Common myeloid progenitor, CD34-positive (primary cell): ENCODE measurements at regions of chr6 and their contacts with region 1.

Region 1: DNA sequence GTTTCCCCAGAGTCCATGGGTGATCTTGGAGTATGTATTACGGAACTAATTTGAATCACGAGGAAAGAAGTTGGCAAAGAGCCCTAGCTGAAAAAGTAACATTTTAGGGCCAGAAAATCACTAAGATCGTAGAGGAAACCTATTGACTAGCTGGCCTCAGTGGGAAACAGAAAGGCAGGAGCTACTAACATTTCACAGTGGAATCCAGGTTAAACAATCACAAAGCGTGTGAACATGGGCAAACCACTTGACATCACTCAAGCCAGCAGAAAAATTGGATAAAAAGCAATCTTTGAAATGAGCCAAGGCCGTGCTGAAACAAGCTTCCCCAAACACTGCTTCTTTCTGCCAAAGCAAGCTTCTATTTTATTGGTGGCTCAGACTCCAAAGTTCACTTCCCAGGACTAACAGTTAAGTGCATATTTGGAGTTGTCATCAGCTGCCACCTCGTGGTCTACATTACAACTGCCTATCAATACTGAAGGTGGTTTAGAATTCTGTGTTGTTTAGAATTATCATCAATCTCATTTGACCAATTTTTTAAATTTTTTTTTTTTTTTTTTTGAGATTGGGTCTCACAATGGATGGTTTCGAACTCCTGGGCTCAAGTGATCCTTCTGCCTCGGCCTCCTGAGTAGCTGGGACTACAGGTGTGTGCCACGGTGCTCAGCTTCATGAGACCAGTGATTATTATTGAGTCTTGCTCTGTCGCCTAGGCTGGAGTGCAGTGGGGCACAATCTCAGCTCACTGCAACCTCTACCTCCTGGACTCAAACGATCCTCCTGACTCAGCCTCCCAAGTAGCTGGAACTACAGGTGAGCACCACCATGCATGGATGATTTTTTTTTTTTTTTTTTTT is 10.6 kb downstream of the RPS10 start:
- DNase-seq: peak; percentile 89 to 94 (median 93)
- H3K4me3 ChIP-seq: no peak overlapping the region
- H3K27ac ChIP-seq: no peak overlapping the region
- H3K4me1 ChIP-seq: peaks cover 0 to 4% (median 2%) of the 10 kb centered on the region in 4 experiments
- H3K27me3 ChIP-seq: no peaks in the 10 kb centered on the region

Region 2: GRCh38 chr6:34161857-34162515 is 253.2 kb before region 1 on chr6:
- CTCF ChIA-PET with region 1: interaction called, 13 read pairs
- POLR2A ChIA-PET with region 1: interaction called, 3 read pairs
- DNase-seq: no peak
- H3K4me3 ChIP-seq: no peak overlapping the region
- H3K27ac ChIP-seq: no peak overlapping the region
- H3K4me1 ChIP-seq: no peaks in the 10 kb centered on the region
- H3K27me3 ChIP-seq: peaks cover 0 to 12% (median 2%) of the 10 kb centered on the region in 5 experiments

Region 3: GRCh38 chr6:34202329-34203201 is 212.7 kb before region 1 on chr6:
- CTCF ChIA-PET with region 1: interaction called, 18 read pairs
- POLR2A ChIA-PET with region 1: no interaction called
- DNase-seq: no peak
- H3K4me3 ChIP-seq: no peak overlapping the region
- H3K27ac ChIP-seq: no peak overlapping the region
- H3K4me1 ChIP-seq: peaks cover 0 to 3% (median 0%) of the 10 kb centered on the region in 4 experiments
- H3K27me3 ChIP-seq: peaks cover 0 to 2% (median 0%) of the 10 kb centered on the region in 5 experiments

Region 4: GRCh38 chr6:34338811-34339210 is 76.4 kb before region 1 on chr6:
- CTCF ChIA-PET with region 1: interaction called, 18 read pairs
- POLR2A ChIA-PET with region 1: no interaction called
- DNase-seq: peak in 2 of 3 donors; percentile 37 to 56
- H3K4me3 ChIP-seq: no peak overlapping the region
- H3K27ac ChIP-seq: peak overlapping the region in 1 of 2 experiments; percentile 3
- H3K4me1 ChIP-seq: peaks cover 0 to 45% (median 33%) of the 10 kb centered on the region in 4 experiments
- H3K27me3 ChIP-seq: no peaks in the 10 kb centered on the region

Region 5: GRCh38 chr6:34425498-34426410 is 10.5 kb after region 1 on chr6 and contains the start of gene RPS10:
- CTCF ChIA-PET with region 1: interaction called, 26 read pairs
- POLR2A ChIA-PET with region 1: interaction called, 7 read pairs
- DNase-seq: peak; percentile 89 to 92 (median 91)
- H3K4me3 ChIP-seq: peak within 1 kb of the TSS; percentile 71 to 99 (median 88)
- H3K27ac ChIP-seq: peak within 1 kb of the TSS; percentile 89 to 96
- H3K4me1 ChIP-seq: peaks cover 0 to 21% (median 14%) of the 10 kb centered on the region in 4 experiments
- H3K27me3 ChIP-seq: no peaks in the 10 kb centered on the region